Activated T-helper 1 cell treated with anti-CD3 and anti-CD28 coated beads, Interleukin-12 subunit alpha, Interleukin-12 subunit beta, Interleukin-2, Interleukin-4 antibody, amounts not matched to agents 30 ng/mL and 10 ng/mL and 1 ng/mL, durations not matched to agents 14 hours and 24 hours and 36 hours (primary cell): ENCODE measurements at regions of chr20 and their contacts with region 1.

Region 1: GRCh38 chr20:23399568-23400241 is 21.6 kb downstream of the NAPB start:
- DNase-seq: no peak
- H3K4me3 Mint-ChIP-seq: peak overlapping the region; percentile 65
- H3K27ac Mint-ChIP-seq: peak overlapping the region; percentile 56
- H3K4me1 Mint-ChIP-seq: peaks cover 62% of the 10 kb centered on the region
- H3K27me3 Mint-ChIP-seq: no peaks in the 10 kb centered on the region

Region 2: GRCh38 chr20:23415959-23416583 is 16.4 kb after region 1 on chr20:
- intact Hi-C with region 1: loop called (anchors 1 kb)
- DNase-seq: no peak
- H3K4me3 Mint-ChIP-seq: no peak overlapping the region
- H3K27ac Mint-ChIP-seq: no peak overlapping the region
- H3K4me1 Mint-ChIP-seq: peaks cover 69% of the 10 kb centered on the region
- H3K27me3 Mint-ChIP-seq: no peaks in the 10 kb centered on the region

Region 3: GRCh38 chr20:23420943-23421931 is 21.5 kb after region 1 on chr20 and contains the start of gene NAPB:
- intact Hi-C with region 1: loop called (anchors 1 kb)
- DNase-seq: peak; percentile 92
- H3K4me3 Mint-ChIP-seq: peak within 1 kb of the TSS; percentile 97
- H3K27ac Mint-ChIP-seq: peak within 1 kb of the TSS; percentile 81
- H3K4me1 Mint-ChIP-seq: peaks cover 49% of the 10 kb centered on the region
- H3K27me3 Mint-ChIP-seq: no peaks in the 10 kb centered on the region
- total RNA-seq, gene NAPB: 14.0 and 15.5 TPM in 2 replicates